Natural killer cell (primary cell): ENCODE measurements at regions of chr15 and their contacts with region 1.

Region 1: GRCh38 chr15:68080783-68081182 is 26.7 kb downstream of the PIAS1 start:
- DNase-seq: no peak
- ATAC-seq: no peak
- H3K4me3 ChIP-seq: no peak overlapping the region
- H3K4me3 Mint-ChIP-seq: no peak overlapping the region
- H3K27ac ChIP-seq: no peak overlapping the region
- H3K27ac Mint-ChIP-seq: no peak overlapping the region
- H3K4me1 ChIP-seq: peaks cover 5% of the 10 kb centered on the region
- H3K4me1 Mint-ChIP-seq: peaks cover 83 to 84% of the 10 kb centered on the region in 2 donors
- H3K27me3 ChIP-seq: no peaks in the 10 kb centered on the region
- H3K27me3 Mint-ChIP-seq: no peaks in the 10 kb centered on the region
- CTCF ChIP-seq: no peak

Region 2: GRCh38 chr15:68042156-68042854 is 38.5 kb before region 1 on chr15:
- intact Hi-C with region 1: no loop called
- DNase-seq: no peak
- ATAC-seq: no peak
- H3K4me3 ChIP-seq: no peak overlapping the region
- H3K4me3 Mint-ChIP-seq: no peak overlapping the region
- H3K27ac ChIP-seq: no peak overlapping the region
- H3K27ac Mint-ChIP-seq: no peak overlapping the region
- H3K4me1 ChIP-seq: no peaks in the 10 kb centered on the region
- H3K4me1 Mint-ChIP-seq: peaks cover 8 to 9% of the 10 kb centered on the region in 2 donors
- H3K27me3 ChIP-seq: peaks cover 2% of the 10 kb centered on the region
- H3K27me3 Mint-ChIP-seq: peaks cover 30 to 48% of the 10 kb centered on the region in 2 donors
- CTCF ChIP-seq: no peak

Region 3: DNA sequence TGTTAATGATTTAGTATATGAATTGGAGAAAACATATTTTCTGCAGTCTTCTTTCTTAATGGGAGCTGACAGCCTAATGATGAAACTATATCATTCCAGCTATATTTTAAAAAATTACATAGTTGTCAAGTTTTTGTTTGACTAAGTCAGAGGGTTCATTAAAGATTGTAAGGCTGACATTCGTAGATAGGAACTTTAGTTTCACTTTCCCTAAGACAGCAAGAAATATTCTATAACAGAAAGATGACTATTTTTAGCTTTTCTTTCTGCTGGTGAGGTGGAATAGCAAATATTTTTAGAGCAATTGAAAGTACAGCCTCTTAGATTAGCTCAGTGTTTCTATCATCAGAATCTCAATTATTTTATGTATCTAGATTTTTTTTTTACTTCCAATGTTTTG is 33.6 kb after region 1 on chr15:
- intact Hi-C with region 1: loop called (anchors 5 kb)
- DNase-seq: peak in 1 of 2 donors; percentile 25
- ATAC-seq: peak; percentile 64 to 74 (median 73)
- H3K4me3 ChIP-seq: no peak overlapping the region
- H3K4me3 Mint-ChIP-seq: peak overlapping the region; percentile 81
- H3K27ac ChIP-seq: peak overlapping the region; percentile 25
- H3K27ac Mint-ChIP-seq: peak overlapping the region; percentile 85 to 88
- H3K4me1 ChIP-seq: peaks cover 3% of the 10 kb centered on the region
- H3K4me1 Mint-ChIP-seq: peaks cover 58 to 71% of the 10 kb centered on the region in 2 donors
- H3K27me3 ChIP-seq: no peaks in the 10 kb centered on the region
- H3K27me3 Mint-ChIP-seq: no peaks in the 10 kb centered on the region
- CTCF ChIP-seq: no peak

Region 4: GRCh38 chr15:68658151-68658550 is 577.4 kb after region 1 on chr15:
- intact Hi-C with region 1: no loop called
- DNase-seq: no peak
- ATAC-seq: no peak
- H3K4me3 ChIP-seq: no peak overlapping the region
- H3K4me3 Mint-ChIP-seq: no peak overlapping the region
- H3K27ac ChIP-seq: no peak overlapping the region
- H3K27ac Mint-ChIP-seq: no peak overlapping the region
- H3K4me1 ChIP-seq: no peaks in the 10 kb centered on the region
- H3K4me1 Mint-ChIP-seq: no peaks in the 10 kb centered on the region
- H3K27me3 ChIP-seq: no peaks in the 10 kb centered on the region
- H3K27me3 Mint-ChIP-seq: peaks cover 0 to 3% of the 10 kb centered on the region in 2 donors
- CTCF ChIP-seq: no peak